Mammary epithelial cell (primary cell): ENCODE measurements at regions of chr2 and their contacts with region 1.

Region 1: GRCh38 chr2:46364797-46365457 is 67.7 kb downstream of the EPAS1 start:
- DNase-seq: peak; percentile 39
- H3K4me3 ChIP-seq: no peak overlapping the region
- H3K27ac ChIP-seq: no peak overlapping the region
- H3K4me1 ChIP-seq: no peaks in the 10 kb centered on the region
- H3K27me3 ChIP-seq: no peaks in the 10 kb centered on the region
- CTCF ChIP-seq: peak; percentile 71 to 82

Region 2: GRCh38 chr2:45964226-45964845 is 400.6 kb before region 1 on chr2:
- CTCF ChIA-PET with region 1: interaction called, 13 read pairs
- dilution Hi-C with region 1: no loop called
- in situ Hi-C with region 1: no loop called
- intact Hi-C with region 1: no loop called
- DNase-seq: peak; percentile 99
- H3K4me3 ChIP-seq: no peak overlapping the region
- H3K27ac ChIP-seq: peak overlapping the region; percentile 64
- H3K4me1 ChIP-seq: peaks cover 29% of the 10 kb centered on the region
- H3K27me3 ChIP-seq: no peaks in the 10 kb centered on the region
- CTCF ChIP-seq: peak in 1 of 2 donors; percentile 3

Region 3: GRCh38 chr2:46010925-46011490 is 353.9 kb before region 1 on chr2:
- CTCF ChIA-PET with region 1: no interaction called
- dilution Hi-C with region 1: no loop called
- in situ Hi-C with region 1: no loop called
- intact Hi-C with region 1: loop called (anchors 2 kb)
- DNase-seq: peak; percentile 37
- H3K4me3 ChIP-seq: no peak overlapping the region
- H3K27ac ChIP-seq: no peak overlapping the region
- H3K4me1 ChIP-seq: peaks cover 36% of the 10 kb centered on the region
- H3K27me3 ChIP-seq: no peaks in the 10 kb centered on the region
- CTCF ChIP-seq: peak; percentile 62 to 69

Region 4: GRCh38 chr2:46082521-46083485 is 282.1 kb before region 1 on chr2:
- CTCF ChIA-PET with region 1: no interaction called
- dilution Hi-C with region 1: no loop called
- in situ Hi-C with region 1: no loop called
- intact Hi-C with region 1: loop called (anchors 1 kb)
- DNase-seq: no peak
- H3K4me3 ChIP-seq: no peak overlapping the region
- H3K27ac ChIP-seq: no peak overlapping the region
- H3K4me1 ChIP-seq: peaks cover 6% of the 10 kb centered on the region
- H3K27me3 ChIP-seq: no peaks in the 10 kb centered on the region
- CTCF ChIP-seq: no peak

Region 5: DNA sequence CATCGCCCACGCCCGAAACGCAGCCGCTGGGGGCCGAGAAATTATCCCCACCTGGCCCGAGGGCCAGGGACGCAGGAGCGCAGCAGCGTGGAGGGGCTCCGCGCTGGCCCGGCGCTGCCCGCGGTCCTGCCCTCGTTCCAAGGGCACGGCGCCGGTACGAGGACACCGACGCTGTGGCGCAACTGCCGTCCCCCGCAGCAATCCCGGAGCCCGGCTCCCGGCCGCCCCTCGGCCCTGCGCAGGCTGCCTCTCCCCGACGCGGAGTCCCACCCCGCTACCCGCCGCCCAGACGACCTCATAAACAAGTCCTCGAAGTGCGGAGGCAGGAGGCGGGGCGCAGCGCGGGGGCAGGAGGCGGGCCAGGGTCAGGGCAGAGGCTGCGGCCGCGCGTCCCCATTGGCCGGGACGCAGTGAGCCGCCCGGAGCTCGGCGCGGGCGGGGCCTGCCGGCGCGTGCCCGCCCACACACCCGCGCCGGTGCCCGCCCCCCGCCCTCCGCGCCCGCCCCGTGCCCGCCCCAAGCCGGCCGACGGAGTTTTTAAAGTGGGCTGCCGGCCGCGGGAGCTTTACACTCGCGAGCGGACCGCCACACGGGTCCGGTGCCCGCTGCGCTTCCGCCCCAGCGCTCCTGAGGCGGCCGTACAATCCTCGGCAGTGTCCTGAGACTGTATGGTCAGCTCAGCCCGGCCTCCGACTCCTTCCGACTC is 67.9 kb before region 1 on chr2 and contains the start of gene EPAS1:
- CTCF ChIA-PET with region 1: no interaction called
- dilution Hi-C with region 1: no loop called
- in situ Hi-C with region 1: no loop called
- intact Hi-C with region 1: loop called (anchors 1 kb)
- DNase-seq: peak; percentile 80
- H3K4me3 ChIP-seq: peak within 1 kb of the TSS; percentile 62 to 96 (median 89)
- H3K27ac ChIP-seq: peak within 1 kb of the TSS; percentile 51
- H3K4me1 ChIP-seq: peaks cover 20% of the 10 kb centered on the region
- H3K27me3 ChIP-seq: no peaks in the 10 kb centered on the region
- CTCF ChIP-seq: no peak
- total RNA-seq, gene EPAS1: 130 to 174 TPM

Region 6: GRCh38 chr2:46461011-46461674 is 96.2 kb after region 1 on chr2:
- CTCF ChIA-PET with region 1: no interaction called
- dilution Hi-C with region 1: no loop called
- in situ Hi-C with region 1: no loop called
- intact Hi-C with region 1: loop called (anchors 1 kb)
- DNase-seq: peak; percentile 32
- H3K4me3 ChIP-seq: no peak overlapping the region
- H3K27ac ChIP-seq: no peak overlapping the region
- H3K4me1 ChIP-seq: no peaks in the 10 kb centered on the region
- H3K27me3 ChIP-seq: no peaks in the 10 kb centered on the region
- CTCF ChIP-seq: peak; percentile 97 to 100